ENCODE measurements at regions of chr6 and their contacts with region 1.

Region 1: DNA sequence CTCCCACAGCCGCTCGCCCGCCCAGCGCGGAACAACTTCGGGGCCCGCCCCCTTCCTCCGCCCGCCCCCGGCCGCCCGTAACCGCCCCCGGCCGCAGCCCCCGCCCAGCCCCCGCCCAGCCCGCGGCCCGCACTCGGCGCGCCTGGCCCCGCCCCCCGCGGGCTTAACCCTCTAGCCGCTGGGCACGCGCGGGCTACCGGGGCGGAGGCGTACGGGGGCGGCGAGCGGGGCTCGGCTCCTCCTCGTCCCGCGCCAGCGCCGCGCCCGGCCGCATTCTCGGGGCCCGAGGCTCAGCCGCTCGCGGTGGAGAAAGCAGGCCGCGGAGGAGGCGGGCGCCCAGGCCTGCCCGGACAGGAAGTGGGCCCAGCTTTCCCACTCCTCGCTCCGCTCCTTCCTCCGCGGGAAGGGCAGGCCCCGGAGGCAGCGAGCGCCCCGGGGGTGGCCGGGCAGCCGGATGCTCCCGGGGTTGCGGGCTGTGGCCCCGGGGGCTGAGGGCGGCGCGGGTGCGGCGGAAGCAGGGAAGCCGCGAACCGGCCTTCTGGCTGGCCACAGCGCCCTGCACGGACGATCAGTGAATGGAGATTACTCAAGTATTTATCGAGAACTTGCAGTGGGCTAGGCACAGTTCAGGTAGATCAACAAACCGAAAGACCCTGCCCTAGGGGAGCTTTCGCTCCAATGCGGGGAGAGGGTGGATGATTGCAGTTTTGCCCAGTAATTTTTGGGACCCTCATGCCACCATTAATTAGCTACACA is at the start of gene TRAM2:
- DNase-seq: peak; percentile 85 to 92 (median 89)
- H3K4me3 ChIP-seq: peak within 1 kb of the TSS; percentile 80
- H3K27ac ChIP-seq: peak within 1 kb of the TSS; percentile 97 to 99
- H3K4me1 ChIP-seq: peaks cover 11% of the 10 kb centered on the region
- H3K27me3 ChIP-seq: no peaks in the 10 kb centered on the region
- CTCF ChIP-seq: peak in 1 of 3 donors; percentile 17
- EP300 ChIP-seq: no peak
- POLR2A ChIP-seq: peak; percentile 31
- total RNA-seq, gene TRAM2: 7.7 to 31.0 (median 22.0) TPM

Region 2: GRCh38 chr6:52284460-52285176 is 292.6 kb before region 1 on chr6 and contains the start of gene MCM3:
- intact Hi-C with region 1: no loop called
- DNase-seq: peak; percentile 94 to 98 (median 96)
- H3K4me3 ChIP-seq: peak within 1 kb of the TSS; percentile 80
- H3K27ac ChIP-seq: peak within 1 kb of the TSS in 1 of 2 donors; percentile 39
- H3K4me1 ChIP-seq: no peaks in the 10 kb centered on the region
- H3K27me3 ChIP-seq: no peaks in the 10 kb centered on the region
- CTCF ChIP-seq: peak in 2 of 3 donors; percentile 10 to 16
- EP300 ChIP-seq: no peak
- POLR2A ChIP-seq: no peak
- total RNA-seq, gene MCM3: 25.5 to 41.8 (median 37.1) TPM

Region 3: GRCh38 chr6:52517502-52518278 is 59.5 kb before region 1 on chr6:
- intact Hi-C with region 1: loop called (anchors 5 to 10 kb)
- DNase-seq: peak; percentile 88 to 93 (median 92)
- H3K4me3 ChIP-seq: no peak overlapping the region
- H3K27ac ChIP-seq: peak overlapping the region; percentile 48 to 88
- H3K4me1 ChIP-seq: peaks cover 22% of the 10 kb centered on the region
- H3K27me3 ChIP-seq: no peaks in the 10 kb centered on the region
- CTCF ChIP-seq: no peak
- EP300 ChIP-seq: no peak
- POLR2A ChIP-seq: peak; percentile 45

Measured in ovary (tissue), 10 donors.